ENCODE measurements at regions of chrX and their contacts with region 1.

Region 1: GRCh38 chrX:17046478-17047097 is 100.1 kb downstream of the REPS2 start:
- DNase-seq: peak; percentile 24 to 66 (median 36)
- ATAC-seq: peak; percentile 97
- H3K4me3 ChIP-seq: no peak overlapping the region
- H3K27ac ChIP-seq: no peak overlapping the region
- H3K4me1 ChIP-seq: no peaks in the 10 kb centered on the region
- H3K27me3 ChIP-seq: peaks cover 0 to 16% of the 10 kb centered on the region in 2 experiments; a peak in 2 of 5 replicates
- CTCF ChIP-seq: peak; percentile 68 to 76 (median 71); a peak in 5 of 6 replicates
- EP300 ChIP-seq: no peak
- POLR2A ChIP-seq: no peak
- RAD21 ChIP-seq: peak; percentile 55 to 85

Region 2: GRCh38 chrX:16826207-16826606 is 220.4 kb before region 1 on chrX:
- CTCF ChIA-PET with region 1: interaction called, 13 read pairs
- POLR2A ChIA-PET with region 1: no interaction called
- in situ Hi-C with region 1: loop called (anchors 10 kb)
- intact Hi-C with region 1: loop called (anchors 1 kb)
- DNase-seq: peak; percentile 21 to 45 (median 24)
- ATAC-seq: peak; percentile 85
- H3K4me3 ChIP-seq: no peak overlapping the region
- H3K27ac ChIP-seq: no peak overlapping the region
- H3K4me1 ChIP-seq: no peaks in the 10 kb centered on the region; a peak in 1 of 5 replicates
- H3K27me3 ChIP-seq: no peaks in the 10 kb centered on the region
- CTCF ChIP-seq: peak in 2 of 3 experiments; percentile 52 to 68; a peak in 4 of 6 replicates
- EP300 ChIP-seq: no peak
- POLR2A ChIP-seq: no peak
- RAD21 ChIP-seq: peak; percentile 49 to 61

Region 3: GRCh38 chrX:16882702-16883486 is 163.7 kb before region 1 on chrX:
- CTCF ChIA-PET with region 1: interaction called, 6 read pairs
- POLR2A ChIA-PET with region 1: no interaction called
- in situ Hi-C with region 1: no loop called
- intact Hi-C with region 1: loop called (anchors 1 kb)
- DNase-seq: peak; percentile 59 to 80 (median 67)
- ATAC-seq: peak; percentile 94
- H3K4me3 ChIP-seq: peak overlapping the region; percentile 47
- H3K27ac ChIP-seq: peak overlapping the region; percentile 44
- H3K4me1 ChIP-seq: peaks cover 5% of the 10 kb centered on the region in 2 experiments; a peak in 4 of 5 replicates
- H3K27me3 ChIP-seq: no peaks in the 10 kb centered on the region; a peak in 2 of 5 replicates
- CTCF ChIP-seq: peak; percentile 66 to 78 (median 72); a peak in 5 of 6 replicates
- EP300 ChIP-seq: no peak
- POLR2A ChIP-seq: no peak; the same call in 1 of the 2 replicates
- RAD21 ChIP-seq: peak; percentile 46 to 72

Region 4: GRCh38 chrX:16946361-16946964 is 100.1 kb before region 1 on chrX and contains the start of gene REPS2:
- CTCF ChIA-PET with region 1: no interaction called
- POLR2A ChIA-PET with region 1: no interaction called
- in situ Hi-C with region 1: no loop called
- intact Hi-C with region 1: no loop called
- DNase-seq: peak; percentile 88 to 95 (median 92)
- ATAC-seq: peak; percentile 100
- H3K4me3 ChIP-seq: peak within 1 kb of the TSS; percentile 43
- H3K27ac ChIP-seq: no peak within 1 kb of the TSS
- H3K4me1 ChIP-seq: peaks cover 3 to 12% of the 10 kb centered on the region in 2 experiments; a peak in 3 of 5 replicates
- H3K27me3 ChIP-seq: peaks cover 10 to 11% of the 10 kb centered on the region in 2 experiments; a peak in 3 of 5 replicates
- CTCF ChIP-seq: peak in 1 of 3 experiments; percentile 20; a peak in 1 of 6 replicates
- EP300 ChIP-seq: no peak
- POLR2A ChIP-seq: no peak
- RAD21 ChIP-seq: no peak
- polyA plus RNA-seq, gene REPS2: 0.01 TPM in 1 of 2 experiments, not detected in the other

Region 5: GRCh38 chrX:17007206-17007683 is 39.3 kb before region 1 on chrX:
- CTCF ChIA-PET with region 1: no interaction called
- POLR2A ChIA-PET with region 1: no interaction called
- in situ Hi-C with region 1: no loop called
- intact Hi-C with region 1: loop called (anchors 5 kb)
- DNase-seq: peak; percentile 7 to 30 (median 14)
- ATAC-seq: peak; percentile 76
- H3K4me3 ChIP-seq: no peak overlapping the region
- H3K27ac ChIP-seq: no peak overlapping the region
- H3K4me1 ChIP-seq: no peaks in the 10 kb centered on the region
- H3K27me3 ChIP-seq: peaks cover 0 to 4% of the 10 kb centered on the region in 2 experiments; a peak in 1 of 5 replicates
- CTCF ChIP-seq: peak; percentile 44 to 50 (median 47); a peak in 5 of 6 replicates
- EP300 ChIP-seq: no peak
- POLR2A ChIP-seq: no peak
- RAD21 ChIP-seq: peak in 1 of 2 experiments; percentile 18; a peak in 1 of 4 replicates

Measured in K562 (cell line).